Breast epithelium (tissue), 4 donors: ENCODE measurements at regions of chr6 and their contacts with region 1.

Region 1: GRCh38 chr6:147530132-147531060 is 21.9 kb downstream of the SAMD5 start:
- DNase-seq: no peak
- H3K4me3 ChIP-seq: peak overlapping the region in 1 of 3 donors; percentile 10
- H3K27ac ChIP-seq: peak overlapping the region in 1 of 2 donors; percentile 8
- H3K4me1 ChIP-seq: no peaks in the 10 kb centered on the region
- H3K27me3 ChIP-seq: no peaks in the 10 kb centered on the region
- CTCF ChIP-seq: no peak
- POLR2A ChIP-seq: no peak

Region 2: GRCh38 chr6:147063469-147064031 is 466.8 kb before region 1 on chr6:
- intact Hi-C with region 1: loop called (anchors 5 kb)
- DNase-seq: no peak
- H3K4me3 ChIP-seq: no peak overlapping the region
- H3K27ac ChIP-seq: peak overlapping the region; percentile 21 to 48
- H3K4me1 ChIP-seq: peaks cover 0 to 5% of the 10 kb centered on the region in 2 donors
- H3K27me3 ChIP-seq: no peaks in the 10 kb centered on the region
- CTCF ChIP-seq: no peak
- POLR2A ChIP-seq: no peak